ENCODE measurements at regions of chr16 and their contacts with region 1.

Region 1: GRCh38 chr16:67279296-67280089 is at the start of gene PLEKHG4:
- DNase-seq: peak; percentile 85
- H3K4me3 Mint-ChIP-seq: peak within 1 kb of the TSS; percentile 79
- H3K27ac Mint-ChIP-seq: peak within 1 kb of the TSS; percentile 86
- H3K4me1 Mint-ChIP-seq: peaks cover 20% of the 10 kb centered on the region
- H3K27me3 Mint-ChIP-seq: no peaks in the 10 kb centered on the region
- total RNA-seq, gene PLEKHG4: 14.3 to 14.4 TPM

Region 2: DNA sequence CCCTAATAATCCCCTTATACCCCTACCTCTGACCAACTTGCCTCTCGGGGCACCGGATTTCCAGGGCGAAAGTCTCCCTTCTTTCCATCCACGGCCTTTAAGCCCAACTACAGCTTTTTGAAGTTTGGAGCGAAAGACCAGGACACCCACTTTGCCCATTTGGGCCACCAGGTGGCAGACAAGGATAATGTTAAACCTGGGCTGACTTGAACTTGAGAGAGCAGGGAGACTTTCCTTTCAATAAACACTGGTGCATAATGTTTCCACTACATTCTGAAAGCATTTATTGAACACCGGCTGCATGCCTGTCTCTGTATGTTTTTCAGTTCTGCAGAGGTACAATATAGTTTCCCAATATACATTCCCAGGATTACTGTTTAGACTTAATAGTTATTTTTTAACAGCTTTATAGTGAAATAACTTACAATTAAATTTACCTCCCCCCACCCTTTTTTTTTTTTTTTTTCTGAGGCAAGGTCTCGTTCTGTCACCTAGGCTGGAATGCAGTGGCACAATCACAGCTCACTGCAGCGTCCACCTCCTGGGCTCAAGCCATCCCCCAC is 325.3 kb before region 1 on chr16:
- CTCF ChIA-PET with region 1: no interaction called
- intact Hi-C with region 1: loop called (anchors 2 kb)
- DNase-seq: peak; percentile 90
- H3K4me3 Mint-ChIP-seq: no peak overlapping the region
- H3K27ac Mint-ChIP-seq: no peak overlapping the region
- H3K4me1 Mint-ChIP-seq: peaks cover 14% of the 10 kb centered on the region
- H3K27me3 Mint-ChIP-seq: peaks cover 27% of the 10 kb centered on the region

Region 3: GRCh38 chr16:67226804-67227557 is 52.5 kb before region 1 on chr16 and contains the start of gene TMEM208:
- CTCF ChIA-PET with region 1: interaction called, 3 read pairs
- intact Hi-C with region 1: loop called (anchors 1 kb)
- DNase-seq: peak; percentile 99
- H3K4me3 Mint-ChIP-seq: peak within 1 kb of the TSS; percentile 100
- H3K27ac Mint-ChIP-seq: peak within 1 kb of the TSS; percentile 96
- H3K4me1 Mint-ChIP-seq: peaks cover 51% of the 10 kb centered on the region
- H3K27me3 Mint-ChIP-seq: no peaks in the 10 kb centered on the region
- total RNA-seq, gene TMEM208: 24.6 to 29.4 TPM

Region 4: GRCh38 chr16:67260426-67261075 is 18.9 kb before region 1 on chr16:
- CTCF ChIA-PET with region 1: interaction called, 10 read pairs
- intact Hi-C with region 1: loop called (anchors 1 kb)
- DNase-seq: peak; percentile 51
- H3K4me3 Mint-ChIP-seq: no peak overlapping the region
- H3K27ac Mint-ChIP-seq: no peak overlapping the region
- H3K4me1 Mint-ChIP-seq: no peaks in the 10 kb centered on the region
- H3K27me3 Mint-ChIP-seq: peaks cover 26% of the 10 kb centered on the region

Region 5: GRCh38 chr16:67339453-67339852 is 60.0 kb after region 1 on chr16:
- CTCF ChIA-PET with region 1: interaction called, 5 read pairs
- intact Hi-C with region 1: loop called (anchors 1 kb)
- DNase-seq: no peak
- H3K4me3 Mint-ChIP-seq: no peak overlapping the region
- H3K27ac Mint-ChIP-seq: no peak overlapping the region
- H3K4me1 Mint-ChIP-seq: no peaks in the 10 kb centered on the region
- H3K27me3 Mint-ChIP-seq: peaks cover 11% of the 10 kb centered on the region

Region 6: DNA sequence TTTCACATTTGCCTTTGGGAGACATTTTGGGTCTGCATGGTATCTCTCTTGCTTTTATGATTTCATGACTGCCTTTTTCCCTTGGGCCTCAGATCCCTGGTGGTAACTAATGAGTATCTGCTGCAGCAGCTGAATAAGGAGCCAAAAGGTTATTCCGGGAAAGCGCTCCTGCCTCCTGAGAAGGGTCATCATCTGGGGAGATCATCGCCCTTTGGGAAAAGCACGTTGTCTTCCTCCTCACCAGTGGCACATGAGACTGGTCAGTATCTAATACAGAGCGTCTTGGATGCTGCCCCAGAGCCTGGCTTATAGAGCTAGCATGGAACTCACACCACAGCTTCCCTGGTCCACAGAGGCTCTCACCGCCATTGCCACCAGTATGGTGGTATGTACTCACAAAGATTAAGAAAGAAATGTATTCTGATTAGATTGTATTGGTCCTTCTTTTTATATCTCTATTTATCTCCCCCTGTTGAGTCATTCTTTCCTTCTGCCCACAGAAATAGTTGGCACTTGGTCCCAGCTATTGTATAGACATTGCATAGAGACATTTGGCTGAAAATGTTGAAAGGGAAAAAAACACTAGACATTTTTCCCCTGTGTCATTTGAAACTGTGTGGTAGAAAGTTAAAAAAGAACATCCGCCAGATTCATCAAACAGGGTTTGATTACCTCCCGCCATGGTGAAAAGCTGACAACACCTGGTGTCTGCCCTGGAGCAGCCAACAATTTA is 105.5 kb after region 1 on chr16:
- CTCF ChIA-PET with region 1: no interaction called
- intact Hi-C with region 1: no loop called
- DNase-seq: no peak
- H3K4me3 Mint-ChIP-seq: no peak overlapping the region
- H3K27ac Mint-ChIP-seq: no peak overlapping the region
- H3K4me1 Mint-ChIP-seq: peaks cover 7% of the 10 kb centered on the region
- H3K27me3 Mint-ChIP-seq: no peaks in the 10 kb centered on the region

Region 7: GRCh38 chr16:67399181-67399733 is 119.8 kb after region 1 on chr16:
- CTCF ChIA-PET with region 1: interaction called, 19 read pairs
- intact Hi-C with region 1: loop called (anchors 1 kb)
- DNase-seq: peak; percentile 59
- H3K4me3 Mint-ChIP-seq: no peak overlapping the region
- H3K27ac Mint-ChIP-seq: no peak overlapping the region
- H3K4me1 Mint-ChIP-seq: peaks cover 4% of the 10 kb centered on the region
- H3K27me3 Mint-ChIP-seq: peaks cover 14% of the 10 kb centered on the region

Region 8: DNA sequence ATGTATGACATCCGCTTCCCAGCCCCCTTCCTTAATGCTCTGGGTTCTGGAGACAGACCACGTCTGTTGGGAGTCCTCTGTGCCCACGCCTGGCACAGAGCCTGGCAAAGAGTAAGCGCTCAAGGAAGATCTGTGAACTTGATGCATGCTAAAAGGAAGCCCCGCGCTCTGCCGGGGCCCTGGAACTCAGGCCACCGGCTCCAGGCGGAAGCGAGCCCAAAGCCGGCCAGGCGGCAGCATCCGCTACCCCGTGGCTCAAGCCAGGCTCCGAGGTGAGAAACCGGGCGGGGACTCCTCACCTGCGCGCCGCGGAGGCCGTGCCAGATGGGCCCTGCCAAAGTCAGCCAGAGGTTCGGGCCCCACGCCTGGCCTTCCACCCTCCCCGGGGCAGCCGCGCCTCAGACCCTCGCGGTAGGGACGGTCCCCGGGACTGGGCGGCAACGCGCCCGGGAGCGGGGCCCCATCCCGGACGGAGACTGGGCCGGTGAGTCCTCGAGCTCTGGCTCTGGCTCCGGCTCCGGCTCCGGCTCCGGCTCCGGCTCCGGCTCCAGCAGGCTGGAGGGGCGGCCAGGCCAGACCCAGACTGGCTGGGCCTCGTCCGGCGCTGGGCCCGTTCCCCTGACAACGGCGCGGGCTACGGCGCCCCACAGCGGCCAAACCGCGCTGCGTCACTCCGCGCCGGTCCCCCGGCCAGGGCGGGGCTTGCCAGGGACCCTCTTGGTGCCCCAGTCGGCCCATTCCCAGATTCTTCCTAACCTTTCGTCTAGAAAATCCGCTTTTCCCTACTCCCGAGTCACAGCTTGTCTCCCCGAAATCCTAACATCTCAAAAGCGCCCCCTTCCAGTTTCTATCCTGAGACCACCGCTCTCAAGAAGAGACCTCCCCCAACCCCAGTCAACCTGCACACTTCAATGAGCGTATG is 136.6 kb after region 1 on chr16 and contains the start of gene ZDHHC1:
- CTCF ChIA-PET with region 1: interaction called, 4 read pairs
- intact Hi-C with region 1: loop called (anchors 1 kb)
- DNase-seq: peak; percentile 48
- H3K4me3 Mint-ChIP-seq: peak within 1 kb of the TSS; percentile 66
- H3K27ac Mint-ChIP-seq: no peak within 1 kb of the TSS
- H3K4me1 Mint-ChIP-seq: peaks cover 6% of the 10 kb centered on the region
- H3K27me3 Mint-ChIP-seq: peaks cover 34% of the 10 kb centered on the region
- total RNA-seq, gene ZDHHC1: 0.12 to 0.32 TPM